Activated CD4-positive, alpha-beta T cell treated with anti-CD3 and anti-CD28 coated beads for 36 hours (primary cell): ENCODE measurements at regions of chr5 and their contacts with region 1.

Region 1: GRCh38 chr5:142783601-142784341 is 13.6 kb downstream of the ARHGAP26 start:
- DNase-seq: peak; percentile 88
- ATAC-seq: peak; percentile 93
- H3K4me3 Mint-ChIP-seq: peak overlapping the region; percentile 45
- H3K27ac Mint-ChIP-seq: peak overlapping the region; percentile 82
- H3K4me1 Mint-ChIP-seq: peaks cover 69% of the 10 kb centered on the region
- H3K27me3 Mint-ChIP-seq: no peaks in the 10 kb centered on the region

Region 2: DNA sequence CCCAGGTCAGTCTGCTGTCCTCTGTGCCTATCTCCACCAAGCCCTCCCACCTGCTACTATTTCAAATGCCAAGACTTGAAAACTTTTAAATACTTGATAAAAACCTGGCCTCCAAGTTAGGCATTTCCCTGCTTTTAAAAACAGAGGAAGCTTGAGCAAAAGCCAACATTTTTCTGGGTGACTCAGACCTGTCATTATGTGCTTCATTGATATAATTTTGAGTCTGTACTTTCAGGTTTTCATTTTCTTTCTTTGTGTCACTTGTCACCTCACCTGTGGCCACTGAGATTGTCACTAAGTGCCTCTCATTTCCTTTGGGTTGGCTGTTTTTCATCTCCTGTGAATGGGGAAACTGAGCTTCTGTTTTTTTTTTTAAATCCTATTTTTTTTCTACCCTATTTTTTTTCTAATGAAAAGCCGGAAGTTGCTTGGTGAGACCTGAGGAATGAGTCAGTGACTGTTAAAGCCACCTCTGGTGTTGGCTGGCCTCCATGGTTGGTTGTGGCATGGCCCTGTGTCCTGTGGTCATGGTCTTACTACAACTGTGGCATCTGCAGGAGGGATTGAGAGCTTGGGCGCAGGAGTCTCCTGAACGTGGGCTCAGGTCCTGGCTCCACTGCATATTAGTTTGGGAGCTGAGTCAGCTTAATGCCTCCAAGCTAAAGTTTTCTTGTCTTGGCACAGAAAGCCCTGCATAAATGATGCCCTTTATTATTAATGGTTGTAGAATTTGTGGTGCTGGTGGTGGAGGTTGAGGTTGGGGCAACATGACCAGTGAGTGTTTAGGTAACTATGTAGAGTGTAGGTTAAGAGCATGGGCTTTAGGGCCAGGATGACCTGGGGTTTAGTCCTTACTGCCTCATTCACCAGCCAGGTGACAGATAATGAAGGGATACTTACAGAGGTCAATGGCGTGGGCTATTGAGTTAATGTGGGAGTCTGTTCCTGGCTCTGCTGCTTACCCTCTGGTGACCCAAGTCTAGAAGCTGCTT is 43.3 kb after region 1 on chr5:
- CTCF ChIA-PET with region 1: interaction called, 8 read pairs
- POLR2A ChIA-PET with region 1: interaction called, 5 read pairs
- intact Hi-C with region 1: loop called (anchors 1 kb)
- DNase-seq: peak; percentile 60
- ATAC-seq: peak; percentile 57
- H3K4me3 Mint-ChIP-seq: no peak overlapping the region
- H3K27ac Mint-ChIP-seq: peak overlapping the region; percentile 63
- H3K4me1 Mint-ChIP-seq: peaks cover 73% of the 10 kb centered on the region
- H3K27me3 Mint-ChIP-seq: no peaks in the 10 kb centered on the region